ENCODE measurements at regions of chr7 and their contacts with region 1.

Region 1: DNA sequence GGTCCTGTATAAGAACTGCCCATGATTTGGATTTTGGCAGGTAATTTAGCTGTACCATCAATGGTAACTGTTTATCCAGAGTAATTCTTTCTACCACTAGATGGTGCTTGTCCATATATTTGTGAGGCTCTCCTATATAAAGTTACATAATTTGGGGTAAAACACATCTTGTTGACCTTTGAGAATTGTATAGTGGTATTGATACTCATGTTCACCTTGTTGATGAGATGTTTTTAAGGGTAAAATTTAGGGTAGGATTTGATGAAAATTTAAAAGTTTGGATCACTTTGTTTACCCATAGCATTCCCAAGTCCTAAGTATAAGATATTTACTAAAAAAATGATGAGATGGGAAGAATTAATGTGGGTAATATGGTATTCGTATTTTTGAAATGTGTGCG is 31.6 kb downstream of the ST7 start:
- DNase-seq: no peak
- ATAC-seq: peak; percentile 65
- H3K4me3 Mint-ChIP-seq: no peak overlapping the region
- H3K27ac Mint-ChIP-seq: no peak overlapping the region
- H3K4me1 Mint-ChIP-seq: no peaks in the 10 kb centered on the region
- H3K27me3 Mint-ChIP-seq: no peaks in the 10 kb centered on the region

Region 2: GRCh38 chr7:117012696-117013095 is 27.8 kb after region 1 on chr7:
- CTCF ChIA-PET with region 1: interaction called, 12 read pairs
- DNase-seq: no peak
- ATAC-seq: no peak
- H3K4me3 Mint-ChIP-seq: no peak overlapping the region
- H3K27ac Mint-ChIP-seq: no peak overlapping the region
- H3K4me1 Mint-ChIP-seq: peaks cover 51% of the 10 kb centered on the region
- H3K27me3 Mint-ChIP-seq: peaks cover 36% of the 10 kb centered on the region

Region 3: DNA sequence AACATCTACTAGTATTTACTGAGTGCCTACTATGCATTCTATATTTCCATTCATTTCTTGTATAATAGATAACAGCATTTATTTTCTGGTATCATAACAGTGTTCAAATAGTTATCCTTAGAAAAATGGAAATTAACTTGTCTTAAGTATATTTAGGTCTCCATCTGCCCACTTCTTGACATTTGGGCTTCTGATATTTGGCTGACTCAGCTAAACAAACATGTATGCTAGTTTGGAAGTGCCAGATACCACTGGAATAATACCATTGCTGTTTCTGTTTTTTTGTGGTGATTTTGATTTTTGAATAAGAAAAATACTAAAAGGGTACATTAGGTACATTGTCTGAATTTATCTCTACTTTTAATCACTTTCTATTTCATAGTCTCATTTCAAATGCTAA is 137.6 kb after region 1 on chr7:
- CTCF ChIA-PET with region 1: interaction called, 47 read pairs
- DNase-seq: no peak
- ATAC-seq: no peak
- H3K4me3 Mint-ChIP-seq: no peak overlapping the region
- H3K27ac Mint-ChIP-seq: no peak overlapping the region
- H3K4me1 Mint-ChIP-seq: peaks cover 7% of the 10 kb centered on the region
- H3K27me3 Mint-ChIP-seq: no peaks in the 10 kb centered on the region

Region 4: GRCh38 chr7:117682681-117683385 is 697.9 kb after region 1 on chr7:
- CTCF ChIA-PET with region 1: no interaction called
- DNase-seq: no peak
- ATAC-seq: no peak
- H3K4me3 Mint-ChIP-seq: no peak overlapping the region
- H3K27ac Mint-ChIP-seq: no peak overlapping the region
- H3K4me1 Mint-ChIP-seq: no peaks in the 10 kb centered on the region
- H3K27me3 Mint-ChIP-seq: no peaks in the 10 kb centered on the region

Measured in activated CD8-positive, alpha-beta memory T cell treated with anti-CD3 and anti-CD28 coated beads, Interleukin-2, amount 10 ng/mL, durations not matched to agents 7 days and 5 days (primary cell).